H1 (cell line): ENCODE measurements at regions of chr1 and their contacts with region 1.

Region 1: DNA sequence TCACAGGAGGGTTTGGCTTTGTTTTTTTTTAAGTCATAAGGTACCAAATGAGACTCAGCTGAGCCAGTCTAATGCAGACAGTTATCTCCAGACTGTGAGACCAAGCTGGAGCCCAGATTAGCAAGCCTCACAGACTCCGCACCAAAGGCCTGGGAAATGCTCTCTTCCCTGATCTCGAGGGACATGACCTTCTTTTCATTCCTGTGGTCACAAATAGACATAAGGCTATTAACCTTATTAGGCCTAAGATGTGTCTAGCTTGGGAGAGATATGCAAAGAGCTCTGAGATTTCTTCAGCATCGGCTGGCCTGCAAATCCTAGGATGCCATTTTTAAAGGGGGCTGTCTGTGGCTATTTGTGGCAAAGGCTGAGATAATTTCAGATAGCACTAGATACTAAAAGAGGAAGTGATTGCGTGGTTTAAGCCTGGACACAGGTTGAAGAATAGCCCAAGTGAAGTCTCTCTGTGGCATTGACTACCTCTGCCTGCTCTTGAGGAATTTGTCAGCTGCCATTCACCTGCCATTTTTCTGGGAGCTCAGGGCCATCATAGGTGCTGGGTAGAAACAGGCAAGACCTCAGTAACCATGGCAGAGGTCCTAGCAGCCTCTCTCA is 301.3 kb downstream of the SIPA1L2 start:
- DNase-seq: no peak
- H3K4me3 ChIP-seq: no peak overlapping the region
- H3K27ac ChIP-seq: no peak overlapping the region
- H3K4me1 ChIP-seq: no peaks in the 10 kb centered on the region
- H3K27me3 ChIP-seq: no peaks in the 10 kb centered on the region; a peak in 1 of 7 replicates
- CTCF ChIP-seq: no peak
- EP300 ChIP-seq: no peak
- POLR2A ChIP-seq: no peak
- RAD21 ChIP-seq: no peak

Region 2: GRCh38 chr1:232340446-232340845 is 11.9 kb after region 1 on chr1:
- CTCF ChIA-PET with region 1: interaction called, 12 read pairs
- POLR2A ChIA-PET with region 1: no interaction called
- DNase-seq: no peak
- H3K4me3 ChIP-seq: no peak overlapping the region
- H3K27ac ChIP-seq: no peak overlapping the region
- H3K4me1 ChIP-seq: no peaks in the 10 kb centered on the region
- H3K27me3 ChIP-seq: no peaks in the 10 kb centered on the region; a peak in 1 of 7 replicates
- CTCF ChIP-seq: no peak
- EP300 ChIP-seq: no peak
- POLR2A ChIP-seq: no peak
- RAD21 ChIP-seq: no peak